ENCODE measurements at regions of chr6 and their contacts with region 1.

Region 1: GRCh38 chr6:38531134-38531533 is 108.6 kb downstream of the BTBD9 start:
- DNase-seq: no peak

Region 2: GRCh38 chr6:40395066-40395704 is 1864.1 kb after region 1 on chr6:
- intact Hi-C with region 1: loop called in 1 of 2 experiments (anchors 10 kb)
- DNase-seq: no peak

Measured in posterior vena cava (tissue), 2 donors.